Caco-2 (cell line): ENCODE measurements at regions of chr17 and their contacts with region 1.

Region 1: GRCh38 chr17:60142872-60143499 is 6.8 kb upstream of the CA4 start:
- DNase-seq: peak; percentile 92 to 93
- H3K4me3 ChIP-seq: no peak overlapping the region
- H3K4me3 Mint-ChIP-seq: peak overlapping the region; percentile 73
- H3K27ac Mint-ChIP-seq: peak overlapping the region; percentile 46
- H3K4me1 ChIP-seq: peaks cover 30% of the 10 kb centered on the region
- H3K4me1 Mint-ChIP-seq: peaks cover 52% of the 10 kb centered on the region
- H3K27me3 ChIP-seq: no peaks in the 10 kb centered on the region
- H3K27me3 Mint-ChIP-seq: no peaks in the 10 kb centered on the region
- CTCF ChIP-seq: peak; percentile 86

Region 2: DNA sequence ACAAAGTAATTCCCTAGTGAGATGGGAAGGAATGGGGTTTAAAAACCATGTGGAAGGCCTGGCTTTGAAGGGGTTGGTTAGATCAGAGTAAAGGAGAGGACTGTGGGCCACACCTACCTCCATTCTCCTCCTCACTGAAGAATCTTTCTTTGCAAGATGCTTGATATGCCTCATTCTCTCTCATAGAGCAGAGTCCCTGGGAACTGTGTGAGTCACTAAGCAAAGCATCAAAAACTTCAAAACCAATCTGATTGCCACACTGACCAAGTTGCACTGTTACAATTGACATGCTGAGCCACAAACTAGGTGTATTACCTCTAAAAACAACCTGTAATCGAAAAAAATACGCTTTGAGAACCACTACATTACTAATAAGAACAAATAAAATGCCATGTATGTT is 252.3 kb before region 1 on chr17:
- CTCF ChIA-PET with region 1: no interaction called
- POLR2A ChIA-PET with region 1: no interaction called
- intact Hi-C with region 1: no loop called
- DNase-seq: no peak
- H3K4me3 ChIP-seq: no peak overlapping the region
- H3K4me3 Mint-ChIP-seq: peak overlapping the region; percentile 93
- H3K27ac Mint-ChIP-seq: peak overlapping the region; percentile 84
- H3K4me1 ChIP-seq: peaks cover 15% of the 10 kb centered on the region
- H3K4me1 Mint-ChIP-seq: peaks cover 34% of the 10 kb centered on the region
- H3K27me3 ChIP-seq: no peaks in the 10 kb centered on the region
- H3K27me3 Mint-ChIP-seq: no peaks in the 10 kb centered on the region
- CTCF ChIP-seq: no peak

Region 3: DNA sequence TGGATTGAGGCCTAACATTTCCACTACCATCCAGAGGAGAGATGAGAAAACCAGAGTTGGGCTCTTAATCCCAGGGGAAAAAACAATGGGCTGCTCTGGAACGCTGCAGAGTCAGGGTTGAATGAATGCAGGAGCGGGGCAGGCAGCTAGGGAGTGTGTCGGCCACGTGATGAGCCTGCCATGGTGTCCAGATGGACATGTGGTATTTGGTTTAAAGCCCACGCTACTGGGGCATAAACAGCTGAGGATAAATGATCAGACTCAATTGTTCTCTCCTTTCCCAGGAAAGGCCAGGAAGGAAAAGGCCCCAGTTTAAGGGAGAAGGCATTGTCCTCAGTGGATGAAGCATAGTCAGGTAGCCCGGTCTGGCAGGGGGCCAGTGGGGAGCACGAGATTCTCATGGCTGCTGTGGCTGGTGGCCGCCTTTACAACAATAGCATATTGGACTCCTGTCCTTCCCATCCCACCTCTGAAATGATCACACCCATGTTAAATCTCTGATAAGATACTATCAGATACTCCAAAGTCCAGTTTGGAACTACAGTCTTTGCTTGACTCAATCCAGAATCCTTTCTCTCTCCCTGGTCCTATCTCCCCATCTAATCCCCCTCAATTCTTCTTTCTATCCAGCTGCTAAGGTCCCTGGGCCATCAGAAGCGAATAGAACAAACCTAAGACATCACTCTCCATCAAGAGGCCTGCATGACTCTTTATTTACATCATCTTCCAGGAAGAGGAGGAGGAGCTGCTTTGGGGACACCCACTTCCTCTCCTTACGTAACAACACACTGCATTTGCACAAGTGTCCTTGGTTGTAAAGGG is 27.1 kb after region 1 on chr17:
- CTCF ChIA-PET with region 1: interaction called, 8 read pairs
- POLR2A ChIA-PET with region 1: no interaction called
- intact Hi-C with region 1: loop called (anchors 1 kb)
- DNase-seq: no peak
- H3K4me3 ChIP-seq: no peak overlapping the region
- H3K4me3 Mint-ChIP-seq: no peak overlapping the region
- H3K27ac Mint-ChIP-seq: peak overlapping the region; percentile 11
- H3K4me1 ChIP-seq: peaks cover 48% of the 10 kb centered on the region
- H3K4me1 Mint-ChIP-seq: peaks cover 45% of the 10 kb centered on the region
- H3K27me3 ChIP-seq: no peaks in the 10 kb centered on the region
- H3K27me3 Mint-ChIP-seq: no peaks in the 10 kb centered on the region
- CTCF ChIP-seq: no peak

Region 4: GRCh38 chr17:60231234-60231633 is 88.2 kb after region 1 on chr17:
- CTCF ChIA-PET with region 1: interaction called, 8 read pairs
- POLR2A ChIA-PET with region 1: no interaction called
- intact Hi-C with region 1: loop called (anchors 1 kb)
- DNase-seq: no peak
- H3K4me3 ChIP-seq: no peak overlapping the region
- H3K4me3 Mint-ChIP-seq: no peak overlapping the region
- H3K27ac Mint-ChIP-seq: peak overlapping the region; percentile 53
- H3K4me1 ChIP-seq: no peaks in the 10 kb centered on the region
- H3K4me1 Mint-ChIP-seq: no peaks in the 10 kb centered on the region
- H3K27me3 ChIP-seq: no peaks in the 10 kb centered on the region
- H3K27me3 Mint-ChIP-seq: no peaks in the 10 kb centered on the region
- CTCF ChIP-seq: peak; percentile 46 to 49

Region 5: GRCh38 chr17:60435244-60436167 is 292.5 kb after region 1 on chr17:
- CTCF ChIA-PET with region 1: no interaction called
- POLR2A ChIA-PET with region 1: no interaction called
- intact Hi-C with region 1: loop called (anchors 1 kb)
- DNase-seq: peak; percentile 66 to 79
- H3K4me3 ChIP-seq: no peak overlapping the region
- H3K4me3 Mint-ChIP-seq: no peak overlapping the region
- H3K27ac Mint-ChIP-seq: no peak overlapping the region
- H3K4me1 ChIP-seq: no peaks in the 10 kb centered on the region
- H3K4me1 Mint-ChIP-seq: peaks cover 9% of the 10 kb centered on the region
- H3K27me3 ChIP-seq: no peaks in the 10 kb centered on the region
- H3K27me3 Mint-ChIP-seq: no peaks in the 10 kb centered on the region
- CTCF ChIP-seq: peak; percentile 85 to 93